ENCODE measurements at regions of chr9 and their contacts with region 1.

Region 1: GRCh38 chr9:122131401-122132001 is 28.1 kb downstream of the NDUFA8 start:
- DNase-seq: peak in 1 of 2 donors; percentile 79
- H3K4me3 ChIP-seq: no peak overlapping the region
- CTCF ChIP-seq: no peak
- POLR2A ChIP-seq: no peak

Region 2: DNA sequence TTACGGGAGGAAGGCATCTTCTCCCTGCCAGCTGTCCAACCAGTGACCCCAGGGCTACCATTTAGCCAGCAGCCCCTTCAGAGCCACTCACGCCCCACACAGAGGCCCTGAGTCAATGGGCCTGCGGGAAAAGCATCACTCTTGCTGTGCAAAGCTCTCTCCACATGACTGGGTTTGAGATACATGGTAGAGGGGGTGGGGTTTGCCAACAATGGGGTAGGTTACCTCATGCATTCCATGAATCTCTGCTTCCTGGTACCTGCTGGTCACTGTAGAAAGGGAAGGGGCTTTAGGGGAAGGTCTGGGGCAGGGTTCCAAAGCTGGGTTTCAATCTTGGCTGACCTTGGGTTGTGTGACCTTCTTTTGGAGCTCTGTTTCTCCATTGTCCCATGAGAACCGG is 15.5 kb before region 1 on chr9:
- intact Hi-C with region 1: no loop called
- DNase-seq: no peak
- H3K4me3 ChIP-seq: no peak overlapping the region
- CTCF ChIP-seq: no peak
- POLR2A ChIP-seq: no peak

Region 3: DNA sequence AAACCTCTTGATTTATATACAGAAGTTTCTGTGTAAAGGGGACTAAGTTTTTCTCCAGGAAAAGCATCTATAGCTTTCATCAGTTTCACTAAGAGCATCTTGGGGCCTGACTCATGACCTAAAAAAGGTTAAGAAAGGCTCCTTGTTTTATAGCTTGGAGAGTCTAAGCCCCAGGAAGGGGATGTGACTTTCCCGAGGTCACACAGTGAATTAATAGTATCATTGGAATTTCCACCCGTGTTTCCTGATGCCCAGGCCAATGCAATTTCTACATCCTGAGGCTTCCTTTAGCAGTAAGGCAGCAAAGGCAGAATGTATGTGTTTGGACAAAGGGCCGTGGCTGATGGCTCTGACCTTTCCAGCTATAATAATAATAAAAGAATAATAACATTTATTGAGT is 36.9 kb after region 1 on chr9:
- intact Hi-C with region 1: no loop called
- DNase-seq: no peak
- H3K4me3 ChIP-seq: no peak overlapping the region
- CTCF ChIP-seq: no peak
- POLR2A ChIP-seq: no peak

Region 4: DNA sequence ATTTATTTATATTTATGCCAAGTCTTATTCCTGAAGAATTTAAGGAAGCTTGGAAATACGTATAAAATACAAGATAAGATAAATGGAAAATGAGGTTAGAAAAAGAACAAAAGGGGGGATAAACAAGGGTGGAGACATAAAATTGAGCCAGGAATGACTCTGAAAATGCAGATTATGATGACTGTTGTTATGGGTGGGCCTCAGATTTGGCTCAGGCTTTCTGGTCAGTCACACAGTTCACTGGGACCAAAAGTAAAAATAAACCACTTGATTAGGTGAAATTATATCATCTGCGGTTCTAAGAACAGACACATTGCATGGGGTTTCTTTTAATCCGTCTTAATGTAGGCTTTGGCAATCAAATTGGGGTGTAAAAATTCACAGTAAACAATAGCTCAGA is 295.2 kb after region 1 on chr9:
- intact Hi-C with region 1: no loop called
- DNase-seq: no peak
- H3K4me3 ChIP-seq: no peak overlapping the region
- CTCF ChIP-seq: no peak
- POLR2A ChIP-seq: no peak

Region 5: DNA sequence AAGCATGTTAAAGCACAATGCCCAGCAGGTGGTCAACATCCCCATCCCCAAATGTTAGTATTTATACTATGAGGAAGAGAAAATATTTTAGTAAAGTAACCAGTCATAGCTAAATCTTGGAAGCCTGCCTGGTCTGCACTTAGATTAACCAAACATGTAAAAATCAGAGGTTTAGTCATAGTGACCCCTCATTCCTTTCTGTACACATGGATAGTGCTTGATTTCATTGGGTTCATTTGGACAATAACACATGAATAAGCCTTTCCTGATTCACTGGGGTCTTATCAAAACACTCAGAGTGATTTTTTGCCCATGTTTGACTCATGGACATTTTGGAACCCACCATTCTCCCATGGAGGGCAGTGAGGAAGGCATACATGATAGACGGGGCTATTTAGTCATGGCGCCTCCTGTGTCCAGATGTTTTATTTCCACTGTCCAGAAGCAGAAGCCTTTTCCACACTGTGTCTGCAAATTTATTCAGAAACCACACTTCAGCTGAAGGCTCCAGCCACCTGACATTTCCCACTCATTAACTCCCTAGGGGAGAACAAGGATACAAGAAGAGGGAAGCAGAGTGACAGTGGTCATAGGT is 313.8 kb after region 1 on chr9:
- intact Hi-C with region 1: loop called (anchors 10 kb)
- DNase-seq: no peak
- H3K4me3 ChIP-seq: no peak overlapping the region
- CTCF ChIP-seq: no peak
- POLR2A ChIP-seq: no peak

Measured in lower leg skin (tissue), 4 donors.